ENCODE measurements at regions of chr10 and their contacts with region 1.

Region 1: DNA sequence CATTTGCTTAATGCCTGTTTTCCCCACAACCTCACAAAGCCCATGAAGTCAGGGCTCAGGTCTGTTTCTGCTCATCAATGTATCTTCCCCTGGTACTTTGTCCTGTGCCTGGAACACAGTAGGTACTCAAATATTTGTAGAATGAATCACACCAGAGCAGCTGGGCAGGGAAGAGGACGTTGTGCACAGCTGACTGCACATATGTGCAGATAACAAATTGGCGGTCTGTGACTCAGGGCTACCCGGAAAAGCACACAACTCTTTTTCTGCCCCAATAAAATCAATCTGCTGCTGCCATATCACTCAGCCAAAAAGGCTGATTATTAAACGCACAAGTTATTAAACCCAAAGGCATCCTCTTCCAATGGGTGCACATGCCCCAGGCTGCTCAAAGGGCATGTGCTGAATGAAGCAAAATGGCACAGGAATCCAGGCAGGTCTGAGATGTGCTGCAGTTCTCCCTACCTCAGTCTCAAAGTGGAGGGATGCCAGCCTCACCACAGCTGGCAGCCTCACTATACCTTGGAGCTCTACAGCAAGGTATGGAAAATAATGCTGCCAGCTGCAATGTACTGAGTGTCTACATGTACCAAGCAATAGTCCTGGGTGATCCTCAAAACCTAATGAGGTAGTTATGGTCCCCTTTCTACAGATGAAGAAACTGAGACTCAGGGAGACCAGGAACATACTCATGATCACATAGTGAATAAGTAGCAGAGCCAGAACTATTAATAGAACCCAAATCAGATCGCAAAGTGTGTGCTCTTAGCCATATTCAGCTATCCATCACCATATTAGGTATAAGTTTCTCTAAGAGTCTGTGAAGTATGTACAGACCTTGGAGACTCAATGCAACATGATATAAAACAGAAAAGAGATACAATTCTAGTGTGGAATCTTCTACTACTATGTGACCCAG is 43.4 kb downstream of the SORBS1 start:
- DNase-seq: peak; percentile 26 to 75 (median 52)
- ATAC-seq: peak; percentile 89
- H3K4me3 ChIP-seq: no peak overlapping the region
- H3K27ac ChIP-seq: no peak overlapping the region
- H3K4me1 ChIP-seq: peaks cover 13 to 35% of the 10 kb centered on the region in 2 experiments; a peak in 4 of 5 replicates
- H3K27me3 ChIP-seq: no peaks in the 10 kb centered on the region
- CTCF ChIP-seq: no peak; a peak in 1 of 6 replicates
- EP300 ChIP-seq: peak; percentile 82
- POLR2A ChIP-seq: no peak
- RAD21 ChIP-seq: no peak; a peak in 1 of 4 replicates

Region 2: DNA sequence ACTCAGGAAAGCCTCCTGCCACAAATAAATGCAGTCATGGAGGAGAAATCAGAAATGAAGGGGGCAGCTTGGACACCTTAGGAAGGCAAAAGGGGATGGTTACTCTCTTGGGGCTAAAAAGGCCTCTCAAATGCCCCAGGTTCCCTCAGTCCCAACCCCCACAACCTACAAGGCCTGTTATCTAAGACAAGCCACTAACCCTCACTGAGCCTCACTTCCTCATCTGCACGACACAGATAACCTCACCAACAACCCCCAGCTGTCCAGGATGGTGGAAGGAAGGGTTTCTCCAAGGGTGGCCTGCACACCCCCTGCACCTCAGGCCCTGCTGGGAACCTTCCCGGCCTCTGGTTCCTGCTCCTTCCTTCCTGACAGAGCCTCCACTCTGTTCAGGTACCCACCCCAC is 14.2 kb after region 1 on chr10:
- CTCF ChIA-PET with region 1: no interaction called
- POLR2A ChIA-PET with region 1: interaction called, 3 read pairs
- in situ Hi-C with region 1: no loop called
- intact Hi-C with region 1: loop called (anchors 2 kb)
- DNase-seq: peak; percentile 86 to 94 (median 90)
- ATAC-seq: peak; percentile 86
- H3K4me3 ChIP-seq: no peak overlapping the region; the same call in 1 of the 2 replicates
- H3K27ac ChIP-seq: peak overlapping the region; percentile 92
- H3K4me1 ChIP-seq: peaks cover 32 to 81% of the 10 kb centered on the region in 2 experiments
- H3K27me3 ChIP-seq: no peaks in the 10 kb centered on the region
- CTCF ChIP-seq: no peak
- EP300 ChIP-seq: peak; percentile 100
- POLR2A ChIP-seq: no peak
- RAD21 ChIP-seq: peak in 1 of 2 experiments; percentile 39; a peak in 2 of 4 replicates

Measured in K562 (cell line).